Activated CD8-positive, alpha-beta T cell treated with anti-CD3 and anti-CD28 coated beads, Interleukin-2, amount 10 ng/mL, durations not matched to agents 7 days and 5 days (primary cell): ENCODE measurements at regions of chr19 and their contacts with region 1.

Region 1: GRCh38 chr19:29831041-29831548 is 19.3 kb downstream of the CCNE1 start:
- DNase-seq: peak; percentile 77
- ATAC-seq: peak; percentile 92
- H3K4me3 Mint-ChIP-seq: peak overlapping the region; percentile 71
- H3K27ac Mint-ChIP-seq: peak overlapping the region; percentile 95
- H3K4me1 Mint-ChIP-seq: peaks cover 49% of the 10 kb centered on the region
- H3K27me3 Mint-ChIP-seq: no peaks in the 10 kb centered on the region

Region 2: GRCh38 chr19:29761575-29762232 is 69.4 kb before region 1 on chr19:
- CTCF ChIA-PET with region 1: interaction called, 15 read pairs
- POLR2A ChIA-PET with region 1: no interaction called
- DNase-seq: no peak
- ATAC-seq: no peak
- H3K4me3 Mint-ChIP-seq: no peak overlapping the region
- H3K27ac Mint-ChIP-seq: no peak overlapping the region
- H3K4me1 Mint-ChIP-seq: no peaks in the 10 kb centered on the region
- H3K27me3 Mint-ChIP-seq: no peaks in the 10 kb centered on the region

Region 3: GRCh38 chr19:29806098-29806866 is 24.8 kb before region 1 on chr19:
- CTCF ChIA-PET with region 1: no interaction called
- POLR2A ChIA-PET with region 1: no interaction called
- DNase-seq: no peak
- ATAC-seq: no peak
- H3K4me3 Mint-ChIP-seq: no peak overlapping the region
- H3K27ac Mint-ChIP-seq: no peak overlapping the region
- H3K4me1 Mint-ChIP-seq: peaks cover 14% of the 10 kb centered on the region
- H3K27me3 Mint-ChIP-seq: no peaks in the 10 kb centered on the region

Region 4: DNA sequence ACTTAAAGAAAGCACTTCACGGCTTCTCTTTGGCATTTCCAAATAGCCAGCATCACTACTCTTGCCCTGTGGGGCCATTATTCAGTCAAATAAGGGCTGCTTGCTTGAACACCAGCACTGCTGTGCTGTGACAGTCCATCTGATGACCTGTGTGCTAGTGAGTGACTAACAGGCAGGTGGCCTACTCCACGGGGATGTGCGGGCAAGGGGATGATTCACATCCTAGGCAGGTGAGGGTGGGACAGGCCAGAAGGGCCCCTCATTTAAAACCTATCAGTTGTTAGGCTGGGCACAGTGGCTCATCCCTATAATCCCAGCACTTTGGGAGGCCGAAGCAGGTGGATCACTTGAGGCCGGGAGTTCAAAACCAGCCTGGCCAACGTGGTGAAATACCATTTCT is 11.1 kb before region 1 on chr19:
- CTCF ChIA-PET with region 1: interaction called, 12 read pairs
- POLR2A ChIA-PET with region 1: interaction called, 9 read pairs
- DNase-seq: no peak
- ATAC-seq: no peak
- H3K4me3 Mint-ChIP-seq: no peak overlapping the region
- H3K27ac Mint-ChIP-seq: no peak overlapping the region
- H3K4me1 Mint-ChIP-seq: peaks cover 5% of the 10 kb centered on the region
- H3K27me3 Mint-ChIP-seq: no peaks in the 10 kb centered on the region

Region 5: GRCh38 chr19:29844891-29845572 is 13.9 kb after region 1 on chr19:
- CTCF ChIA-PET with region 1: interaction called, 4 read pairs
- POLR2A ChIA-PET with region 1: interaction called, 10 read pairs
- DNase-seq: peak; percentile 96
- ATAC-seq: peak; percentile 87
- H3K4me3 Mint-ChIP-seq: peak overlapping the region; percentile 85
- H3K27ac Mint-ChIP-seq: peak overlapping the region; percentile 83
- H3K4me1 Mint-ChIP-seq: peaks cover 14% of the 10 kb centered on the region
- H3K27me3 Mint-ChIP-seq: peaks cover 10% of the 10 kb centered on the region

Region 6: DNA sequence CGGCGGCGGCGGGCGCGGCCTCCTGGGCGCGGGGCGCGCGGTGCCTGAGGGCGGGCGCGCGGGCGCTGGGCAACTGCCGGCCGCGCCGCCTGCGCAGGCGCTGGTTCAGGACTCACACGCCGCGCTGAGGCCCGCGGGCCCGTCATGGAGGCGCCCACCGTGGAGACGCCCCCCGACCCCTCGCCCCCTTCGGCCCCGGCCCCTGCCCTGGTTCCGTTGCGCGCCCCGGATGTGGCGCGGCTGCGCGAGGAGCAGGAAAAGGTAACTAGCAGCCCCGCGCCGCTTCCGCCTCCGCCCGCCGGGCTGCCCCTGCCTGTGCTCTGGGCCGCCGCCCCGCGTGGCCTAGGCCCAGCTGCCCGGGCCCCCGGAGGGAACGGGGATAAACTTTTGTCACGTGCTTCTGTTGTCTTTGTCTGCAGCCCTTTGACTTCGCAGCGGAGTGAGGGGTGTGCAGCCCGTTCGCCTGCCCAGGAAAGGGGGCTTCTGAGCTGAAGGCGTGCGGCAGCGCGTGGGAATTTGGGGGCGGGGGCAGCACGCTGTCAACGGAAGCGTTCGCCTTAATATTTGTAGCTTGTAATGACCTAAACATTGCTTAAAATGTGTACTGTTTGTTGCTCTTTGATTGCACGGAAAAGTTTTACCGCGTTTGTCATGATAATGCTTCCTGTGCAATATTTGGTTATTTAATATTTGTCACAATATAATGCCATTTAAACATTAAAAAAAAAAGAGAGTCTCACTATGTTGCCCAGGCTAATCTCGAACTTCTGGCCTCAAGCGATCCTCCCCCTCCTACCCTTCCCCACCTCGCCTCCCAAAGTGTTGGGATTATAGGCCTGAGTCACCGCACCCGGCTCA is 111.5 kb after region 1 on chr19:
- CTCF ChIA-PET with region 1: no interaction called
- POLR2A ChIA-PET with region 1: no interaction called
- DNase-seq: peak; percentile 84
- ATAC-seq: peak; percentile 87
- H3K4me3 Mint-ChIP-seq: peak overlapping the region; percentile 98
- H3K27ac Mint-ChIP-seq: peak overlapping the region; percentile 94
- H3K4me1 Mint-ChIP-seq: peaks cover 40% of the 10 kb centered on the region
- H3K27me3 Mint-ChIP-seq: no peaks in the 10 kb centered on the region